IMR-90 (cell line): ENCODE measurements at regions of chr1 and their contacts with region 1.

Region 1: GRCh38 chr1:188906921-188907641 is 1570.6 kb downstream of the BRINP3 start:
- DNase-seq: no peak
- ATAC-seq: no peak
- H3K4me3 ChIP-seq: no peak overlapping the region
- H3K27ac ChIP-seq: no peak overlapping the region
- H3K4me1 ChIP-seq: no peaks in the 10 kb centered on the region
- H3K27me3 ChIP-seq: no peaks in the 10 kb centered on the region
- CTCF ChIP-seq: no peak
- POLR2A ChIP-seq: no peak
- RAD21 ChIP-seq: no peak

Region 2: GRCh38 chr1:188877668-188878067 is 29.4 kb before region 1 on chr1:
- CTCF ChIA-PET with region 1: no interaction called
- POLR2A ChIA-PET with region 1: no interaction called
- dilution Hi-C with region 1: no loop called
- in situ Hi-C with region 1: no loop called
- intact Hi-C with region 1: no loop called
- DNase-seq: no peak
- ATAC-seq: no peak
- H3K4me3 ChIP-seq: no peak overlapping the region
- H3K27ac ChIP-seq: no peak overlapping the region
- H3K4me1 ChIP-seq: no peaks in the 10 kb centered on the region
- H3K27me3 ChIP-seq: no peaks in the 10 kb centered on the region
- CTCF ChIP-seq: no peak
- POLR2A ChIP-seq: no peak
- RAD21 ChIP-seq: no peak

Region 3: DNA sequence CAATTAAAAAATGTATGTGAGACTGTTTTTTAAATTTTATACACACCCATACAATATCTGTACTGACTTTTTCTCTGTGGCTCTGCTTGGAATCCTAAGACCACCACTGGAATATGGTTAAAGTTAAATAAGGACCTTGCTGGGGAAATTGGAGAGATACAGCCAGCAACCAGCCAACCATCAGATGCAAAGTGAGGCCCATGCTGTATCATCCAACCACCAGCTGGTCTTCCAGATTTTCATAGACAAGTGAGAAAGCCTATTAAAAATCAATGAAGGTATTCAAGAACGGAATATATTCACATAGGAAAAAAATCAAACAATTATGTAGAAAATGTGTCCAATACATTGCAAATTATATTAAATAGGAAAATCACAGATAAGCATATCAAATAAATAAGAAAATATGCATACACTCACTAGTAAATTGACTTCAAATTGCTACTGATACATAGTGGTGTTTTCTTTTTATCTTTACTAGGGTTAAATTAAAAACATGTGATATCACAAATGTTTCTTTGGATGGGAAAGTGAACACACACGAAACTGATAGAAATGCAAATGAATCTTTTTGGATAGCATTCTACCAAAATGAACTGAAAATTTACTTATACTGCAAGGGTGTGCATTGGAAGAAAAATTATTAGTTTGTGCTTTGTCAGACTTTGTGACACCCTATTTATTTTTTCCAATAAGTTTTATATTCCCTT is 84.3 kb after region 1 on chr1:
- CTCF ChIA-PET with region 1: no interaction called
- POLR2A ChIA-PET with region 1: no interaction called
- dilution Hi-C with region 1: no loop called
- in situ Hi-C with region 1: no loop called
- intact Hi-C with region 1: loop called (anchors 5 kb)
- DNase-seq: no peak
- ATAC-seq: no peak
- H3K4me3 ChIP-seq: no peak overlapping the region
- H3K27ac ChIP-seq: no peak overlapping the region
- H3K4me1 ChIP-seq: no peaks in the 10 kb centered on the region
- H3K27me3 ChIP-seq: no peaks in the 10 kb centered on the region
- CTCF ChIP-seq: no peak
- POLR2A ChIP-seq: no peak
- RAD21 ChIP-seq: no peak